Gastrocnemius medialis (tissue), 4 donors: ENCODE measurements at regions of chr9 and their contacts with region 1.

Region 1: DNA sequence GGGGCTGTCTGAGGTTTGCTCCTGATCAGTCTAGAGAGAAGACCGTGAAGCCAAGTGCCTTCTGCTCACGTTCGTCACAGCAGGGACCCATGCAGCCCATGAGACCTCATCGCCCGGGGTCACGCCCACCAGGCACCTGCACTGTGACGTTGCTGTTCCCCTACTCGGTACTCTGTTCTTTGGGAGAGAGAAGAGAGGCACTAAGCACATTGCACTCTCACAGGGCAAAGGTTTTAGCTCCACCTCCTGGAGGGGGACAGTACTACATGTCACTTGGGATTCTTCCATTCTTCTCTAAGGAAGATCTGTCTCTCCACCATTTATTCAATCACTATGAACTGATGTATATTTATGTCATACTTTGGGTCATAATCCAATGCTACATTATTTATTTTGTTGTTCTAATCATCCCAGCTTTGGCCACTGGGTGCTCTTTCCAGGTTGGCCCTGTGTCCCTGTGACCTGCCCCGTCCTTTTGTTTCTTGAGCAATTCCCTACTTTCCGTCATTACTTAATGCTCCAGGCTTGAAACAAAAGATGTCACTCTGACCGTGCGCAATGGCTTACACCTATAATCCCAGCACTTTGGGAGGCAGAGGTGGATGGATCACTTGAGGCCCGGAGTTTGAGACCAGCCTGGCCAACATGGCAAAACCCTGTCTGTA is 31.4 kb upstream of the BRD3 start:
- DNase-seq: peak in 1 of 2 donors; percentile 30
- ATAC-seq: peak; percentile 56 to 81
- H3K4me3 ChIP-seq: no peak overlapping the region
- H3K27ac ChIP-seq: no peak overlapping the region
- H3K4me1 ChIP-seq: no peaks in the 10 kb centered on the region
- H3K27me3 ChIP-seq: peaks cover 0 to 7% (median 0%) of the 10 kb centered on the region in 3 donors
- CTCF ChIP-seq: peak; percentile 62 to 88 (median 87)
- POLR2A ChIP-seq: no peak

Region 2: DNA sequence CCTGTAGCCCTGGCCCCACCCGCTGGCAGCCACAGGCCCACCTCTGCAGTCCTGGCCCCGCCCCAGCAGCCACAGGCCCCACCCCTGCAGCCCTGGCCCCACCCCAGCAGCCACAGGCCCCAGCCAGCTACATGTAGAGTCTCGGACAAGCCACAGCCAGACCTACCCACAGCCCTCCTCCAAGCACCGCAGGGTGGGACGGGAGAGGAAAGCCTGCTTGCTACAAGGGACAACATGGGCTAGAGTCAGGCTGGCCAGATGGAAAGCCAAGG is 311.6 kb before region 1 on chr9:
- in situ Hi-C with region 1: loop called (anchors 5 to 10 kb)
- intact Hi-C with region 1: no loop called
- DNase-seq: no peak
- ATAC-seq: no peak
- H3K4me3 ChIP-seq: no peak overlapping the region
- H3K27ac ChIP-seq: no peak overlapping the region
- H3K4me1 ChIP-seq: no peaks in the 10 kb centered on the region
- H3K27me3 ChIP-seq: no peaks in the 10 kb centered on the region
- CTCF ChIP-seq: no peak
- POLR2A ChIP-seq: no peak

Region 3: DNA sequence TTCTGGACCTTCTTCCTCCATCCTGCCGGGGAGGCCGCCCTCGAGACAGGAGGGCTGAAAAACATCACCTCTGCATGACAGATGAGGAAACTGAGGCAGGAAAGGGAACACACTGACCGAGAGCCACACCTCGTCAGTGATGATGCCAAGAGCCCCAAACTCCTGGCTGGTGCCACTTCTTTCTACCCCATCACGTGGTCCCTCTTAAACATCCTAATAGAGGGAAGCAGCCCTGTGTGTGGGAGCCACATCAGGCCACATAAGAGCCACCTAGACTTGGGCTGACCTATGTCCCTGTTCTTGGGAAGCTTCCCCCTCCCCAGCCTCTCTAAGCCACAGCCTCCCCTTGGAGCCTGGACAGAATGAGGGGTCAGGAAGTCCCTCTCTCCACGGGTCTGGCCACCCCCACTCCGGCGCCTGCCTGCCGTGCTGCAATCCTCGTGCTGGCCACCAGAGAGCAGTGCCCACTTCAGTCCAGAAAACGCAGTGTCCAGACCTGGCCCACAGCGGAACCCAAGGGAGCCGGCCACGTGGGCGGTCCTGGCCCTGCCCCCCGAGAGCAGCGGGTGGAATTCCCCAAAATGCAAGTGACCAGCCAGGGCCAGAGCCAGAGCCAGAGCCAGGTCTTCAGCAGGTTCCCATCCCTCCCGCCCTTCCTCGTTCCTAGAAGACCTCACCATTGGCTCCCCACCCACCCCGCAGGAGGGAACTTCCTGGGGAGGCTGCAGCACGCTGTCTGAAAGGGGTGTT is 306.4 kb before region 1 on chr9:
- in situ Hi-C with region 1: loop called (anchors 5 to 10 kb)
- intact Hi-C with region 1: no loop called
- DNase-seq: peak; percentile 32 to 51
- ATAC-seq: peak; percentile 79 to 85
- H3K4me3 ChIP-seq: no peak overlapping the region
- H3K27ac ChIP-seq: no peak overlapping the region
- H3K4me1 ChIP-seq: peaks cover 0 to 4% of the 10 kb centered on the region in 2 donors
- H3K27me3 ChIP-seq: no peaks in the 10 kb centered on the region
- CTCF ChIP-seq: peak; percentile 83 to 94 (median 93)
- POLR2A ChIP-seq: no peak

Region 4: DNA sequence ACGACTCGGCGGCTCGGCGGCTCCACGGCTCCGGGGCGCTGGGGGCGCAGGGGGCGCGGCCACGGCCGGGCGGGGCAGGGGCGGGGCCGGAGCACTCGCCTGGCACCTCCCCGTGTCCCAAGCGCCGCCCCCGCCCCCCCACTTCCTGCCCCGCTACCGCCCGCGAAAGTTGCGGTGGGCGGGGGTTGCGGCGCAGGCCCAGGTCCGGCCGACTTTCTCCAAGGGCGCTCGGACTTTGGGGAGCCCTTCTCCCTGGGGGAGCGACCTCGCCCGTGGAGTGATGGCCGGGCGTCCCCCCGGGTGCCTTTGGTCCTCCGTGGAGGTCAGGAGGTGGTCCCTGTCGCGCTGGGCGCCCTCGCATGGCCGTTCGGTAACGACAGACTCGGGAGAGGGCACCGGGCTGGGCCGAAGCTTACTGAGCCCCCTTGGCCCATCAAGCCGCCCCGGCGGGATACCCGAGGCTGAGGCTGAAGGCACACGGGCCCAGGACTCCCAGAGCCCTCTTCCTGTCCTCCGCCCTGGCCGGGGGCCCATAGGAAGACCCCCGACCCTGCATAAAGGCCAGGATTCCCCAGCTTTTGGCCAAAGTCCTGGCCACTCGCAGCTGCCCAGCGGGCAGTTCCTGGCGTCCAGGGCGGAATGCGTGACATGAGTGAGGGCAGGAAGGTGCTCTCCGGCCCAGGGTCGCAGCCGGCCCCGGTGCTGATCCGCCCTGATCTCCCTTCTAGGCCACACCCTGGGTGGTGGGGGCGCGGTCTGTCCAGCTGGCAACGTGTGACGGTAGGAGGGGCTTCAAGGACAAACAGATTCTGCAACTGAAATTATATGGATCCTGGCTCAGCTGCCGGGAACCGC is 106.2 kb before region 1 on chr9:
- in situ Hi-C with region 1: no loop called
- intact Hi-C with region 1: loop called (anchors 10 kb)
- DNase-seq: peak; percentile 47 to 63
- ATAC-seq: peak; percentile 53 to 57
- H3K4me3 ChIP-seq: peak overlapping the region; percentile 64 to 80 (median 72)
- H3K27ac ChIP-seq: peak overlapping the region; percentile 74 to 83 (median 77)
- H3K4me1 ChIP-seq: peaks cover 9 to 20% of the 10 kb centered on the region in 2 donors
- H3K27me3 ChIP-seq: peaks cover 11 to 33% (median 33%) of the 10 kb centered on the region in 3 donors
- CTCF ChIP-seq: peak in 1 of 5 experiments; percentile 21
- POLR2A ChIP-seq: peak; percentile 14 to 15

Region 5: GRCh38 chr9:134135343-134136118 is 36.3 kb after region 1 on chr9 and contains the start of gene WDR5:
- in situ Hi-C with region 1: no loop called
- intact Hi-C with region 1: no loop called
- DNase-seq: peak; percentile 85 to 90
- ATAC-seq: peak; percentile 91 to 92
- H3K4me3 ChIP-seq: peak within 1 kb of the TSS; percentile 78 to 99 (median 89)
- H3K27ac ChIP-seq: peak within 1 kb of the TSS; percentile 86 to 97 (median 94)
- H3K4me1 ChIP-seq: peaks cover 37 to 58% of the 10 kb centered on the region in 2 donors
- H3K27me3 ChIP-seq: no peaks in the 10 kb centered on the region
- CTCF ChIP-seq: peak in 3 of 5 experiments; percentile 15 to 27 (median 26)
- POLR2A ChIP-seq: peak in 1 of 2 donors; percentile 51
- total RNA-seq, gene WDR5: 19.8 to 39.3 (median 31.9) TPM